Right cardiac atrium (tissue), 5 donors: ENCODE measurements at regions of chr14 and their contacts with region 1.

Region 1: GRCh38 chr14:89425931-89426330 is 8.9 kb upstream of the FOXN3 start:
- DNase-seq: peak in 1 of 3 donors; percentile 43
- ATAC-seq: no peak
- H3K4me3 ChIP-seq: no peak overlapping the region
- H3K27ac ChIP-seq: no peak overlapping the region
- H3K4me1 ChIP-seq: peaks cover 12% of the 10 kb centered on the region
- H3K27me3 ChIP-seq: no peaks in the 10 kb centered on the region

Region 2: GRCh38 chr14:89618811-89619551 is 193.1 kb after region 1 on chr14:
- intact Hi-C with region 1: loop called in 1 of 4 experiments (anchors 10 kb)
- DNase-seq: peak; percentile 82 to 92 (median 90)
- ATAC-seq: peak; percentile 95 to 96
- H3K4me3 ChIP-seq: peak overlapping the region; percentile 95
- H3K27ac ChIP-seq: peak overlapping the region; percentile 76
- H3K4me1 ChIP-seq: peaks cover 3% of the 10 kb centered on the region
- H3K27me3 ChIP-seq: no peaks in the 10 kb centered on the region

Region 3: DNA sequence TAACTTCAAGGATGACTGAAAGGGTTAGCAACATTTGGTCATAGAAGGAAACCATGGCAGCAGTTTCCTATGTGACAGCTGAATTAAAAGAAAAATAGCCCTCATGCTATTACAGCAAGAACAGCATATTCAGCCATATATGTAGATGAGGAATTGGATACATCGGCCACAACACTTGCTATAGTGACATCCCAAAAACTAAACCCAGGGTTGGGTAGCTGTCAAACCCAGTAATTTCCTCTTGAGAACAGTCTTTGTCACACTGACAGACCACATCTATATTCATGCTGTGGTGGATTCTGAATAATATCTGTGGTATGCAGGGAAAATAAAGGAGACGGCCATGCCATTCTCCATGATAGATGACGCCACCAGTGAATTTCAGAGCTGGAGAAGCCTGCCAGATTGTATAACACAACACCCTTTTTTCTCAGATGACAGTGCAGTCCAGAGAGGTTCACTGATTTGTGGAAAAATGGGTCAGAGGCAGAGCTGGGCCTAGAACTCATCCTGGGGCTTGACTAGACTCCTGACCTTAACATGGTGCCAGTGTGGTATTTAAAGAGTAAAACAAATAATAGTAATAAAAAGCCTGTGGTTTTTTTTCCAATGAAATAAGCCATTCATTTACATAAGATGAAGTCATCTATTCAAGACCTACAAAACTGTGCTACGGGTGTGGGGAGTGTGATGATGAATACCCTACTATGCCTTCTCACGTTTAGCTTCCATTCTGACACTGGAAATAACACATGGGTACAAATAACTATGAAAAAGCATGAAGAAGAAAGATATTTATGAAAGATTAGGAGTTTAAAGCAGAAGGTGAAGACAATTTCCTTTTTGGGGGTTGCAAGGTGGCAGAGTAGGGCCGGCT is 496.3 kb after region 1 on chr14:
- intact Hi-C with region 1: no loop called
- DNase-seq: no peak
- ATAC-seq: no peak
- H3K4me3 ChIP-seq: no peak overlapping the region
- H3K27ac ChIP-seq: no peak overlapping the region
- H3K4me1 ChIP-seq: no peaks in the 10 kb centered on the region
- H3K27me3 ChIP-seq: no peaks in the 10 kb centered on the region